ENCODE measurements at regions of chr1 and their contacts with region 1.

Region 1: GRCh38 chr1:194309697-194310096 is 1123.3 kb upstream of the B3GALT2 start:
- DNase-seq: no peak
- H3K4me3 ChIP-seq: no peak overlapping the region
- H3K27ac ChIP-seq: no peak overlapping the region
- H3K4me1 ChIP-seq: no peaks in the 10 kb centered on the region
- CTCF ChIP-seq: no peak

Region 2: GRCh38 chr1:193827516-193827915 is 482.2 kb before region 1 on chr1:
- CTCF ChIA-PET with region 1: no interaction called
- POLR2A ChIA-PET with region 1: interaction called, 11 read pairs
- intact Hi-C with region 1: no loop called
- DNase-seq: no peak
- H3K4me3 ChIP-seq: no peak overlapping the region
- H3K27ac ChIP-seq: no peak overlapping the region
- H3K4me1 ChIP-seq: no peaks in the 10 kb centered on the region
- CTCF ChIP-seq: no peak